ENCODE measurements at regions of chr1 and their contacts with region 1.

Region 1: GRCh38 chr1:37807555-37808368 is at the starts of genes C1orf122 and YRDC:
- DNase-seq: peak; percentile 82 to 95 (median 94)
- ATAC-seq: peak; percentile 88
- H3K4me3 ChIP-seq: peak within 1 kb of the TSS; percentile 69 to 92
- H3K4me3 Mint-ChIP-seq: peak within 1 kb of the TSS; percentile 97
- H3K27ac ChIP-seq: peak within 1 kb of the TSS; percentile 86 to 89
- H3K27ac Mint-ChIP-seq: peak within 1 kb of the TSS; percentile 98
- H3K4me1 ChIP-seq: peaks cover 30% of the 10 kb centered on the region
- H3K4me1 Mint-ChIP-seq: peaks cover 40% of the 10 kb centered on the region
- H3K27me3 ChIP-seq: no peaks in the 10 kb centered on the region
- H3K27me3 Mint-ChIP-seq: no peaks in the 10 kb centered on the region
- CTCF ChIP-seq: no peak
- total RNA-seq, gene C1orf122: 13.8 to 14.8 TPM
- total RNA-seq, gene YRDC: 31.6 to 32.8 TPM

Region 2: DNA sequence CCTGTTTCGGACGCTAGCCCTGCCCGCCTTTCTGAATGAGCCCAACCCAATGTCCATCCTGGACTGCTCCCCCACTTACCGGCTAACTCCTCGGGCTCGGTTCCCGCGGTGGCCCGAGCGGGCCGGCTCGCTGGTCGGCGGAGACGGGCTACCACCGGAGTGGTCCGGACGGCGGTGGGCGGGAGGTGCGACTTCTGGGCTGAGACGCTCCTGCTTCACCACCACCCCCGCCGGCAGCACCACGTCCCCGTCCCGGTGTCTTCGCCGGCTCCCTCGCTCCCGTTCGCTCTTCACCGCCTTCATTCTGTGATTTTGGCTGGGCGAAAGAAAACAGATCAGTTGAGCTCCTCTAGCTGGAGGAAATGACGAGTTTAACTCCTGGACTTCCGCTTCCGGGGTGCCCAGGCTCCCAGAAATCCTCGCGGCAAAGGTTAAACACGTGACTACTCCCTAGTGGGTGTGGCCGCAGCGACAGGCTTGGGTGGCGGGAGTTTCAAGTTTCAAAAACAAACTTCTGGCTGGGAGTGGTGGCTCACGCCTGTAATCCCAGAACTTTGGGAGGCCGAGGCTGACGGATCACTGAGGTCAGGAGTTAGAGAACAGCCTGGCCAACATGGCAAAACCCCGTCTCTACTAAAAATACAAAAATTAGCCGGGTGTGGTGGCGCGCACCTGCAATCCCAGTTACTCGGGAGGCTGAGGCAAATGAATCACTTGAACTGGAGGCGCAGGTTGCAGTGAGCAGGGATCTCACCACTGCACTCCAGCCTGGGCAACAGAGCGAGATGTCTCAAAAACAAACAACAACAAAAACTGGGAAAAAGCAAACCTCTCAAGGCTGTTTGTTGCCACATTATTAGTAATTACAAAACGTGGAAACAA is 253.6 kb before region 1 on chr1 and contains the start of gene SNIP1:
- CTCF ChIA-PET with region 1: no interaction called
- POLR2A ChIA-PET with region 1: no interaction called
- intact Hi-C with region 1: loop called in 1 of 2 experiments (anchors 2 kb)
- DNase-seq: peak; percentile 84 to 96 (median 91)
- ATAC-seq: peak; percentile 95
- H3K4me3 ChIP-seq: peak within 1 kb of the TSS; percentile 88 to 97
- H3K4me3 Mint-ChIP-seq: peak within 1 kb of the TSS; percentile 100
- H3K27ac ChIP-seq: peak within 1 kb of the TSS; percentile 88 to 91
- H3K27ac Mint-ChIP-seq: peak within 1 kb of the TSS; percentile 100
- H3K4me1 ChIP-seq: peaks cover 24% of the 10 kb centered on the region
- H3K4me1 Mint-ChIP-seq: peaks cover 43% of the 10 kb centered on the region
- H3K27me3 ChIP-seq: no peaks in the 10 kb centered on the region
- H3K27me3 Mint-ChIP-seq: peaks cover 2% of the 10 kb centered on the region
- CTCF ChIP-seq: no peak
- total RNA-seq, gene SNIP1: 71.7 to 84.2 TPM

Region 3: GRCh38 chr1:37752583-37753471 is 54.9 kb before region 1 on chr1:
- CTCF ChIA-PET with region 1: no interaction called
- POLR2A ChIA-PET with region 1: no interaction called
- intact Hi-C with region 1: no loop called
- DNase-seq: peak in 1 of 9 experiments; percentile 12
- ATAC-seq: peak; percentile 26
- H3K4me3 ChIP-seq: no peak overlapping the region
- H3K4me3 Mint-ChIP-seq: peak overlapping the region; percentile 66
- H3K27ac ChIP-seq: no peak overlapping the region
- H3K27ac Mint-ChIP-seq: no peak overlapping the region
- H3K4me1 ChIP-seq: no peaks in the 10 kb centered on the region
- H3K4me1 Mint-ChIP-seq: peaks cover 10% of the 10 kb centered on the region
- H3K27me3 ChIP-seq: peaks cover 7% of the 10 kb centered on the region in 2 experiments
- H3K27me3 Mint-ChIP-seq: peaks cover 35% of the 10 kb centered on the region
- CTCF ChIP-seq: no peak

Region 4: DNA sequence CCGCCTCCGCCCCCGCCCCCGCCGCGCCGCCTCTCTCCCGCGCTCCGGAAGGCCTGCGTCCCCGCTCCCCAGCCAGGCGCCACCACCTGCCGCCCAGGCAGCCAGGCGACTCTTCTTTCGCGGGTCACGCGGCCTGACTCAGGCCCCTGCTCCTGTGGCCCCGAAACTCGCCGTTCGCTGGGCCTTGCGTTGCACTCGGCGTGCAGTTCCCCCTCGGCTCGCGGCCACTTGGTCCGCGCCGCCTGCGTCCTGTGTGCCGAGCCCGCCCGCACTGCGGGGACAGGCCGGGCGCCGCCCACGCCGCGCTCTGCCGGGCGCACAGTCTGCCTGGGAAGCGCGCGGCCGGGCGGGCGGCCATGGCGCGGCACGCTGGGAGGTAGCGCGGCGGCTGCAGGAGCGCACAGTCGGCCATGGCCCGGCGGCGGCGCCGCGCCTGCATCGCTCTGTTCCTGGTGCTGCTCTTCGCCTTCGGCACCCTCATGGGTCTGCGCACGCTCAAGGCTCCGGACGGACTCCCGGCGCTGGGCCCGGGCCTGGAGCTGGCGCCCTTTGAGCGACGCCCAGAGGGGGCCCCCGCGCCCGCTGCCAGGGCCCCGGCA is 13.9 kb before region 1 on chr1 and contains the start of gene MANEAL:
- CTCF ChIA-PET with region 1: interaction called, 3 read pairs
- POLR2A ChIA-PET with region 1: interaction called, 7 read pairs
- intact Hi-C with region 1: loop called in 1 of 2 experiments (anchors 1 kb)
- DNase-seq: peak in 5 of 9 experiments; percentile 23 to 67 (median 35)
- ATAC-seq: peak; percentile 84
- H3K4me3 ChIP-seq: peak within 1 kb of the TSS; percentile 33 to 45
- H3K4me3 Mint-ChIP-seq: peak within 1 kb of the TSS; percentile 76
- H3K27ac ChIP-seq: no peak within 1 kb of the TSS
- H3K27ac Mint-ChIP-seq: no peak within 1 kb of the TSS
- H3K4me1 ChIP-seq: peaks cover 10% of the 10 kb centered on the region
- H3K4me1 Mint-ChIP-seq: peaks cover 10% of the 10 kb centered on the region
- H3K27me3 ChIP-seq: peaks cover 0 to 5% of the 10 kb centered on the region in 2 experiments
- H3K27me3 Mint-ChIP-seq: peaks cover 28% of the 10 kb centered on the region
- CTCF ChIP-seq: no peak
- total RNA-seq, gene MANEAL: 0.60 to 0.61 TPM

Region 5: DNA sequence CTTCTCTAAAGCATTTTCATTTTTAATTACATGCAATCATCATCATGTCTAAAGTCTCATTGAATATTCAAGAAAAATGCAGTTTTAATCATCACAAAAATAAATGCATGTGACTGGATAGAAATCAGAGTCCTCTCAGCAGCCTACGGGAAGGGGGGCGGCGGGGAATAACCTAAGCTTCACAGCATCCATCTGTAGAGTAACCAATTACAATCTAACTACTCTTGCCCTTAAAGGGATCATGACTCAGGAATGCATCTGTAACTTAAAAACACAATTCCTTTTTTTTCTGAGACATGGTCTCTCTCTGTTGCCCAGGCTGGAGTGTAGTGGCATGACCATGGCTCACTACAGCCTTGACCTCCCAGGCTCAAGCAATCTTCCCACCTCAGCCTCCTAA is 29.0 kb after region 1 on chr1:
- CTCF ChIA-PET with region 1: no interaction called
- POLR2A ChIA-PET with region 1: no interaction called
- intact Hi-C with region 1: no loop called
- DNase-seq: no peak
- ATAC-seq: no peak
- H3K4me3 ChIP-seq: no peak overlapping the region
- H3K4me3 Mint-ChIP-seq: no peak overlapping the region
- H3K27ac ChIP-seq: no peak overlapping the region
- H3K27ac Mint-ChIP-seq: no peak overlapping the region
- H3K4me1 ChIP-seq: no peaks in the 10 kb centered on the region
- H3K4me1 Mint-ChIP-seq: no peaks in the 10 kb centered on the region
- H3K27me3 ChIP-seq: no peaks in the 10 kb centered on the region
- H3K27me3 Mint-ChIP-seq: no peaks in the 10 kb centered on the region
- CTCF ChIP-seq: no peak

Region 6: DNA sequence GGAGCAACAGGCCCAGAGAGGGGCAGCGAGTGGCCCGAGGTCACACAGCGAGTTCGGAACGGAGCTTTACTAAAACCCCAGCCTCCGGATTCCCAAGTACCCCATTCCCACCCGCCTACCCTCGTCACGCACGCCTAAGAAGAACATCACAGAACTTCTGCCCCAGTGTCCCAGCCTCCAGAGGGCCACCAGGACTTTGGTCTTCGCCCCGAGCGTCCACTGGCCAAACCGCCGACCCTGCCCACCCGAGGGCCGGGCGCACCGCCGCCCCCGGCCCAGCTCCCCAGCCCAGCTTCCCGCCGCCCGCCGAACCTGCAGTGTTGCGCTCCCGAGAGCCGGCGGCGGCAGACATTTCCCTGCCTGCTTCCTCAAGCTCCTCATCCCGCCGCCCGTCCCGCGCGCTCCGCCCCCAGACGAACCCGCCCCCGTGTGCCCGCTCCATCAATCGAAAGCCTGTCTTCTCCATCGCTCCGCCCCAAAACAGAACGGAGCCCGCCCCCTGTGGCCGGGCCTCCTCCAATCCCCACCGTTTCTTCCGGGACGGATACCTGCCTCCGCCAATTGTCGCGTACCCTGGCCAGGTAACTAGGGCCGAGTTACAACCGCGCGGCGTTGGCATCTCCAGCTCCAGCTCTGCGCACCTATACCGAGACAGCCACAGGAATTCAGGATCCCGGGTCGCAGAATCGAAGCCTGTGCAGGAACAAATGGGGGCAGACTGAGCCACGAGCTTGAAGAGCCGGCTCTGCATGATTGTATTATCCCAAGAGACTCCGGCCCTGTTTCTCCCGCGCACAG is 123.8 kb after region 1 on chr1:
- CTCF ChIA-PET with region 1: no interaction called
- POLR2A ChIA-PET with region 1: interaction called, 3 read pairs
- intact Hi-C with region 1: loop called (anchors 1 to 5 kb)
- DNase-seq: peak; percentile 96 to 98 (median 97)
- ATAC-seq: peak; percentile 98
- H3K4me3 ChIP-seq: peak overlapping the region; percentile 79 to 89
- H3K4me3 Mint-ChIP-seq: peak overlapping the region; percentile 100
- H3K27ac ChIP-seq: peak overlapping the region; percentile 40 to 66
- H3K27ac Mint-ChIP-seq: peak overlapping the region; percentile 89
- H3K4me1 ChIP-seq: peaks cover 26% of the 10 kb centered on the region
- H3K4me1 Mint-ChIP-seq: peaks cover 40% of the 10 kb centered on the region
- H3K27me3 ChIP-seq: no peaks in the 10 kb centered on the region
- H3K27me3 Mint-ChIP-seq: no peaks in the 10 kb centered on the region
- CTCF ChIP-seq: no peak

Region 7: GRCh38 chr1:37995751-37996345 is 188.1 kb after region 1 on chr1:
- CTCF ChIA-PET with region 1: no interaction called
- POLR2A ChIA-PET with region 1: no interaction called
- intact Hi-C with region 1: loop called in 1 of 2 experiments (anchors 5 kb)
- DNase-seq: peak in 3 of 9 experiments; percentile 24 to 60 (median 46)
- ATAC-seq: peak; percentile 45
- H3K4me3 ChIP-seq: peak overlapping the region in 1 of 2 experiments; percentile 48
- H3K4me3 Mint-ChIP-seq: peak overlapping the region; percentile 82
- H3K27ac ChIP-seq: peak overlapping the region in 1 of 2 experiments; percentile 7
- H3K27ac Mint-ChIP-seq: peak overlapping the region; percentile 55
- H3K4me1 ChIP-seq: peaks cover 28% of the 10 kb centered on the region
- H3K4me1 Mint-ChIP-seq: peaks cover 35% of the 10 kb centered on the region
- H3K27me3 ChIP-seq: no peaks in the 10 kb centered on the region
- H3K27me3 Mint-ChIP-seq: no peaks in the 10 kb centered on the region
- CTCF ChIP-seq: no peak